GM12878 (cell line): ENCODE measurements at regions of chr3 and their contacts with region 1.

Region 1: GRCh38 chr3:72818092-72818773 is 30.0 kb downstream of the SHQ1 start:
- DNase-seq: no peak
- ATAC-seq: no peak
- H3K4me3 ChIP-seq: no peak overlapping the region
- H3K27ac ChIP-seq: 0 out of 2 replicates have a peak overlapping the region, but pooled peaks have one; percentile 13
- H3K4me1 ChIP-seq: peaks cover 47% of the 10 kb centered on the region
- H3K27me3 ChIP-seq: no peaks in the 10 kb centered on the region
- CTCF ChIP-seq: peak; percentile 43 to 74 (median 53)
- EP300 ChIP-seq: no peak
- POLR2A ChIP-seq: no peak
- RAD21 ChIP-seq: peak; percentile 77

Region 2: DNA sequence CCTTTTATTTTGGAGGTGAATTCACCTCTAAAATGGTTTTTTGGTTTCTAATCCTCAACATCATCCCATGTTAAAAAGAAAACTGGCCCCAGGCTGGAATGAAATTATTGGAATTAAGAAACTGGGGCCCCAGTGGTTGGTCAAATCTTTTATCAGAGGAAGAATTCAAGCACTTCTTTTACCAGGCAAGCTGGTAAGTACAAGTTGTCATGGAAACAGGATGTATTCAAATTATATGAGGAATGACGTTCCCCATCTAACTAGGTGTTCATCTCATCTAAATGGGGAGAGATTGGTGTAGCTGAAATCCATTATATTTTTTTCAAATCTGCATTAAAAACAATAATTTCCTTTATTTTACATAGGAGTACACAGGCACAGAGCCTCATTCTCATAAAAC is 1083.3 kb before region 1 on chr3:
- CTCF ChIA-PET with region 1: interaction called, 29 read pairs
- POLR2A ChIA-PET with region 1: no interaction called
- RAD21 ChIA-PET with region 1: interaction called, 4 read pairs
- SMC1A ChIA-PET with region 1: interaction called, 5 read pairs
- in situ Hi-C with region 1: loop called (anchors 5 kb)
- intact Hi-C with region 1: no loop called
- DNase-seq: no peak
- ATAC-seq: no peak
- H3K4me3 ChIP-seq: no peak overlapping the region
- H3K27ac ChIP-seq: no peak overlapping the region
- H3K4me1 ChIP-seq: no peaks in the 10 kb centered on the region
- H3K27me3 ChIP-seq: peaks cover 0 to 4% of the 10 kb centered on the region in 2 experiments; a peak in 2 of 4 replicates
- CTCF ChIP-seq: no peak
- EP300 ChIP-seq: no peak
- POLR2A ChIP-seq: no peak
- RAD21 ChIP-seq: no peak

Region 3: DNA sequence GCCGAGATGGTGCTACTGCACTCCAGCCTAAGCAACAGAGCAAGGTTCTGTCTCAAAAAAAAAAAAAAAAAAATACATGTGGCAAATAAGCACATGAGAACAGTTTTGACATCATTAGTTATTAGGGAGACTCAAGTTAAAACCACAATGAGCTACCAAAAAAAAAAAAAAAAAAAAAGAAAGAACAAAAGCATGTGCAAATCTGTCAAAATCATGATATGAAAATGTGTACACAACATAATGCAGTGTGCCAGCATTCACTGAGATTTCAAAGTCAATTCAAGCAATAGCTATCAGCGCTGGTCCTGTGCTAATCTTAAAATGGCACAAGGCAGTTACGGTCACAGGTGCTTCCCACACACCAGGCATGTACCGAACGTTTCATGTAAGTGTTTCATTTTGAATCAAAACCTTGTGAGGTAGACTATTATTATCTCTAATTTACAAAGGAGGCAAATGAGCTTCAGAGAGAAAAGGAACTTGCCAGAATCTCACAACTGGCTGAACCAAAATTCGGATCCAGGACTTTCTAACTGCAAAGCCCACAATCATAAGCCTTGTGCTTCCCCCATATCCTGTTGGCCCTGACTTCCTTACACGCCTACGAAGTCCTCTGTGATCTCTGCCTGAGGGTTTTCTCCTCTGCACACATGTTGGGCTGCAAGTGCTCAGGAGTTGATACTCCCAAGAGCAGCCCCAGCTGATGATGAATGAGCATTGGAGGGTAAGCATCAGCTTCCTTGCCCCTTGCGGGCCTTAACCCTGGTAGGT is 833.2 kb before region 1 on chr3:
- CTCF ChIA-PET with region 1: no interaction called
- POLR2A ChIA-PET with region 1: interaction called, 4 read pairs
- RAD21 ChIA-PET with region 1: interaction called, 7 read pairs
- SMC1A ChIA-PET with region 1: interaction called, 5 read pairs
- in situ Hi-C with region 1: no loop called
- intact Hi-C with region 1: loop called (anchors 10 kb)
- DNase-seq: peak; percentile 97
- ATAC-seq: peak; percentile 89
- H3K4me3 ChIP-seq: peak overlapping the region; percentile 22; the same call in 1 of the 2 replicates
- H3K27ac ChIP-seq: peak overlapping the region; percentile 92
- H3K4me1 ChIP-seq: peaks cover 64% of the 10 kb centered on the region
- H3K27me3 ChIP-seq: no peaks in the 10 kb centered on the region
- CTCF ChIP-seq: no peak
- EP300 ChIP-seq: peak; percentile 90 to 95
- POLR2A ChIP-seq: no peak
- RAD21 ChIP-seq: peak; percentile 25; the same call in 1 of the 2 replicates

Region 4: DNA sequence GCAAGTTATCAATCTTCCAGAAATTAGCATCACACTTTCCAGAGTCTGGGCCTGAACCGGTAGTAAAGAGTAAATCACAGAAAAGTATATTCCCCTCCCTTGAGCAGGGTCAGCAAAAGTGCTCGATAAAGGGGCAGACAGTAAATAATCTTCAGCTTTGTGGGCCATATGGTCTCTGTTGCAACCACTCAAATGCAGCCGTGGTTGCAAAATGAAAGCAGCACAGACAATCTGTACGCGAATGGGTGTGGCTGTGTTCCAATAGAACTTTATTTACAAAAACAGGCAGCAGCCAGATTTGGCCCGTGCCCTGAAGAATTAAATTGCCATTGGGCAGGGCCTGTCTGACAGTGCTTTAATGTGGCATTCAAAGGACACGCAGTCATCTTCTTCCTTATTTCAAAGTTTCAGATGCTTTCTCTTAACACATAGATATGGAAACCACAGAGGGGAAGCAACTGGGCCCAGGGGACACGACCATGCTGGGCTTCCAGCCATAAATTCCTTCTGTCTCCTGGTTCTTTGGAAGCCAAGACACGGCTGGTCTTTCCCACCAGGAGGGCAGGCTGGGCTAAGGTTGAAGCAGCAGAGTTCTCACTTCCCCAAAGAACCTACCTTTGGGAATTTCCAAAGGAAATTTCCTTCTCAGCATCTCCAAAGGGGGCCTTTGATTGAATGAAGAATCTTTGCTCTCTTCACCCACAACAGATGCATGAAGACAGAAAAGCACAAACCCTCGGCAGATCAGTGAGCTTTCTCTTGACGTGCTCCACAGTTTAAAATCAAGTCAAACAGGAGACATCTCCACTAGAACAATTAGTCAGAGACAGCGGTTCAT is 543.5 kb before region 1 on chr3:
- CTCF ChIA-PET with region 1: no interaction called
- POLR2A ChIA-PET with region 1: no interaction called
- RAD21 ChIA-PET with region 1: no interaction called
- SMC1A ChIA-PET with region 1: no interaction called
- in situ Hi-C with region 1: no loop called
- intact Hi-C with region 1: loop called (anchors 5 kb)
- DNase-seq: no peak
- ATAC-seq: peak; percentile 87
- H3K4me3 ChIP-seq: no peak overlapping the region
- H3K27ac ChIP-seq: no peak overlapping the region
- H3K4me1 ChIP-seq: peaks cover 29% of the 10 kb centered on the region
- H3K27me3 ChIP-seq: no peaks in the 10 kb centered on the region
- CTCF ChIP-seq: no peak
- EP300 ChIP-seq: no peak
- POLR2A ChIP-seq: no peak
- RAD21 ChIP-seq: no peak

Region 5: GRCh38 chr3:72665701-72666443 is 152.4 kb before region 1 on chr3:
- CTCF ChIA-PET with region 1: interaction called, 239 read pairs
- POLR2A ChIA-PET with region 1: no interaction called
- RAD21 ChIA-PET with region 1: interaction called, 131 read pairs
- SMC1A ChIA-PET with region 1: interaction called, 142 read pairs
- in situ Hi-C with region 1: loop called (anchors 5 kb)
- intact Hi-C with region 1: loop called (anchors 1 kb)
- DNase-seq: no peak
- ATAC-seq: peak; percentile 89
- H3K4me3 ChIP-seq: no peak overlapping the region
- H3K27ac ChIP-seq: no peak overlapping the region
- H3K4me1 ChIP-seq: no peaks in the 10 kb centered on the region
- H3K27me3 ChIP-seq: no peaks in the 10 kb centered on the region
- CTCF ChIP-seq: peak; percentile 56 to 68 (median 57); a peak in 5 of 6 replicates
- EP300 ChIP-seq: no peak
- POLR2A ChIP-seq: no peak
- RAD21 ChIP-seq: peak; percentile 84

Region 6: DNA sequence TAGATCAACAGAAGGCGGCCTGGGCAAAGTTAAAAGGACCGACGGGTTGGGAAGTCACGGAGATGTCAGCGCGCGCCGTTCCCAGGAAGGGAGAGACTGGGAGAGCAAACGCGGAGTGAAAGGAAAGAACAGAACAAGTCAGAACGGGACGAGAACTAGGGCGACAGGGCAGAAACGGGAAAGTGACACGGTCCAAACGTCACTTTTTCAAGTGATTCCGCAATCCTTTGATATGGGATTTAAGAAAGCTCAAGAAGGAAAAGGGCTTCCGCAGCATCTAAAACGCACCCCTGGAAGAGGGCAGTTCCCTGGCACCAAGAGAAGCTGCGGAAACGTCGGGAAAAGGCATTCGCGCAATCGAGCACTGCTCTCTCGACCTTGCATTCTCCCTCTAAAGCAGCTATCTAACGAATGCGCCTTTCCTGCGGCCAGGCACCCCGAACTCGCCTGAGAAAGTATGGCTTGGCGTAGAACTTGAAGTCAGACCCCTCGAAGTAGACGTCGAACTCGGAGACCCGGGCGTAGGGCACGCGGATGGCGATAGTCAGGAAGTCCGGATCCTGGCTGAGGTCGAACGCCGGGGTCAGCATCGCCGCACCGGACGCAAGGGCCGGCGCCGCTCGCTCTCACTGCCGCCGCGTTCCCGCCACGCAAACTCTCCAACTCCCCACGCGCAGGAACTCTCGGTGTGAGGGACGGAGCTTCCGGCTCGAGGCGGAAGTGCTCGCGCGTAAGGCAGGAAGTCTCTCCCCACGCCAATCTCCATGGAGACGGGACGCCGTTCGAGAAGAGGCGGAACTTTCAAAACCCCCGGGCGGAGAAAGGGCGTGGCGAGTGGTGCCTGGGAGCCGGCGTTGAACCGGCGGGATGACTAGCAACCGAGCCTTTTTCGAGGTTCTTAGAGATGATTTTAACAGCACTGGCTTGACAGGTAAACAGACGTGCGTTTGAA is 29.8 kb after region 1 on chr3 and contains the start of gene SHQ1:
- CTCF ChIA-PET with region 1: interaction called, 16 read pairs
- POLR2A ChIA-PET with region 1: interaction called, 3 read pairs
- RAD21 ChIA-PET with region 1: interaction called, 8 read pairs
- SMC1A ChIA-PET with region 1: interaction called, 43 read pairs
- in situ Hi-C with region 1: no loop called
- intact Hi-C with region 1: no loop called
- DNase-seq: peak; percentile 81
- ATAC-seq: peak; percentile 88
- H3K4me3 ChIP-seq: peak within 1 kb of the TSS; percentile 97
- H3K27ac ChIP-seq: peak within 1 kb of the TSS; percentile 79
- H3K4me1 ChIP-seq: peaks cover 35% of the 10 kb centered on the region
- H3K27me3 ChIP-seq: no peaks in the 10 kb centered on the region
- CTCF ChIP-seq: no peak
- EP300 ChIP-seq: no peak
- POLR2A ChIP-seq: peak; percentile 88
- RAD21 ChIP-seq: no peak
- polyA plus RNA-seq, gene SHQ1: 12.6 to 12.8 TPM